Natural killer cell (primary cell): ENCODE measurements at regions of chr9 and their contacts with region 1.

Region 1: GRCh38 chr9:124202447-124202971 is 55.2 kb upstream of the NEK6 start:
- DNase-seq: peak; percentile 44 to 60
- ATAC-seq: peak; percentile 83 to 96 (median 87)
- H3K4me3 ChIP-seq: no peak overlapping the region
- H3K4me3 Mint-ChIP-seq: peak overlapping the region; percentile 76
- H3K27ac ChIP-seq: peak overlapping the region; percentile 61
- H3K27ac Mint-ChIP-seq: peak overlapping the region; percentile 79 to 92
- H3K4me1 ChIP-seq: peaks cover 78% of the 10 kb centered on the region
- H3K4me1 Mint-ChIP-seq: peaks cover 64 to 71% of the 10 kb centered on the region in 2 donors
- H3K27me3 ChIP-seq: no peaks in the 10 kb centered on the region
- H3K27me3 Mint-ChIP-seq: no peaks in the 10 kb centered on the region
- CTCF ChIP-seq: no peak

Region 2: GRCh38 chr9:124257844-124258606 is 55.5 kb after region 1 on chr9 and contains the start of gene NEK6:
- intact Hi-C with region 1: loop called (anchors 5 kb)
- DNase-seq: peak; percentile 56 to 62
- ATAC-seq: peak; percentile 79 to 82 (median 80)
- H3K4me3 ChIP-seq: peak within 1 kb of the TSS; percentile 94
- H3K4me3 Mint-ChIP-seq: peak within 1 kb of the TSS; percentile 98
- H3K27ac ChIP-seq: peak within 1 kb of the TSS; percentile 43
- H3K27ac Mint-ChIP-seq: peak within 1 kb of the TSS; percentile 81 to 94
- H3K4me1 ChIP-seq: peaks cover 53% of the 10 kb centered on the region
- H3K4me1 Mint-ChIP-seq: peaks cover 44 to 65% of the 10 kb centered on the region in 2 donors
- H3K27me3 ChIP-seq: no peaks in the 10 kb centered on the region
- H3K27me3 Mint-ChIP-seq: no peaks in the 10 kb centered on the region
- CTCF ChIP-seq: no peak
- total RNA-seq, gene NEK6: 25.0 to 34.9 (median 33.0) TPM

Region 3: GRCh38 chr9:124457887-124458431 is 255.4 kb after region 1 on chr9:
- intact Hi-C with region 1: no loop called
- DNase-seq: no peak
- ATAC-seq: no peak
- H3K4me3 ChIP-seq: no peak overlapping the region
- H3K4me3 Mint-ChIP-seq: no peak overlapping the region
- H3K27ac ChIP-seq: no peak overlapping the region
- H3K27ac Mint-ChIP-seq: no peak overlapping the region
- H3K4me1 ChIP-seq: no peaks in the 10 kb centered on the region
- H3K4me1 Mint-ChIP-seq: no peaks in the 10 kb centered on the region
- H3K27me3 ChIP-seq: no peaks in the 10 kb centered on the region
- H3K27me3 Mint-ChIP-seq: peaks cover 0 to 2% of the 10 kb centered on the region in 2 donors
- CTCF ChIP-seq: no peak